ENCODE measurements at regions of chr1 and their contacts with region 1.

Region 1: GRCh38 chr1:113811888-113812660 is at the start of gene RSBN1:
- DNase-seq: peak; percentile 94 to 98
- ATAC-seq: peak; percentile 84 to 97 (median 88)
- H3K4me3 ChIP-seq: peak within 1 kb of the TSS; percentile 85
- H3K4me3 Mint-ChIP-seq: peak within 1 kb of the TSS; percentile 98
- H3K27ac ChIP-seq: peak within 1 kb of the TSS; percentile 97
- H3K27ac Mint-ChIP-seq: peak within 1 kb of the TSS; percentile 95
- H3K4me1 ChIP-seq: peaks cover 8% of the 10 kb centered on the region
- H3K4me1 Mint-ChIP-seq: peaks cover 37 to 38% of the 10 kb centered on the region in 2 donors
- H3K27me3 ChIP-seq: no peaks in the 10 kb centered on the region
- H3K27me3 Mint-ChIP-seq: no peaks in the 10 kb centered on the region
- CTCF ChIP-seq: no peak
- total RNA-seq, gene RSBN1: 30.1 to 37.9 (median 36.5) TPM

Region 2: DNA sequence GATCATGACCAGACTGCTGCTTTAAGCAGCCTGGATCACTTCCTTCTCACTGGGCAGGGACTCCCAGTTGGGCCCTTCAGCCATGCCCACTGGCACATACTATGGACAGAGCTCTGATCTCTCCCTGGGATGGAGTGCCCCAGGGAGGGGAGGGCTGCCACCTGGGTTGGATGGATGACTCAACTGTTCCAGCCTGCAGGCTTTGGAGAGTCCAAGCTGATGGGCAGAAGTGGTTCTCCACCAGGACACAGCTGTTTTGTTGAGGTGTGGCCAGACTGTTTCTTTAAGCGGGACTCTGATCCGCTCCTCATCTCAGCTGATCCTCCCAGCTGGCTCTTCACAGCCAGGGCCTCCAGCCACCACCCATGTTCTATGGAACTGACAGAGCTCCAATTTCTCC is 254.9 kb before region 1 on chr1:
- intact Hi-C with region 1: no loop called
- DNase-seq: no peak
- ATAC-seq: no peak
- H3K4me3 ChIP-seq: no peak overlapping the region
- H3K4me3 Mint-ChIP-seq: no peak overlapping the region
- H3K27ac ChIP-seq: no peak overlapping the region
- H3K27ac Mint-ChIP-seq: no peak overlapping the region
- H3K4me1 ChIP-seq: no peaks in the 10 kb centered on the region
- H3K4me1 Mint-ChIP-seq: no peaks in the 10 kb centered on the region
- H3K27me3 ChIP-seq: no peaks in the 10 kb centered on the region
- H3K27me3 Mint-ChIP-seq: peaks cover 14 to 26% of the 10 kb centered on the region in 2 donors
- CTCF ChIP-seq: no peak

Region 3: DNA sequence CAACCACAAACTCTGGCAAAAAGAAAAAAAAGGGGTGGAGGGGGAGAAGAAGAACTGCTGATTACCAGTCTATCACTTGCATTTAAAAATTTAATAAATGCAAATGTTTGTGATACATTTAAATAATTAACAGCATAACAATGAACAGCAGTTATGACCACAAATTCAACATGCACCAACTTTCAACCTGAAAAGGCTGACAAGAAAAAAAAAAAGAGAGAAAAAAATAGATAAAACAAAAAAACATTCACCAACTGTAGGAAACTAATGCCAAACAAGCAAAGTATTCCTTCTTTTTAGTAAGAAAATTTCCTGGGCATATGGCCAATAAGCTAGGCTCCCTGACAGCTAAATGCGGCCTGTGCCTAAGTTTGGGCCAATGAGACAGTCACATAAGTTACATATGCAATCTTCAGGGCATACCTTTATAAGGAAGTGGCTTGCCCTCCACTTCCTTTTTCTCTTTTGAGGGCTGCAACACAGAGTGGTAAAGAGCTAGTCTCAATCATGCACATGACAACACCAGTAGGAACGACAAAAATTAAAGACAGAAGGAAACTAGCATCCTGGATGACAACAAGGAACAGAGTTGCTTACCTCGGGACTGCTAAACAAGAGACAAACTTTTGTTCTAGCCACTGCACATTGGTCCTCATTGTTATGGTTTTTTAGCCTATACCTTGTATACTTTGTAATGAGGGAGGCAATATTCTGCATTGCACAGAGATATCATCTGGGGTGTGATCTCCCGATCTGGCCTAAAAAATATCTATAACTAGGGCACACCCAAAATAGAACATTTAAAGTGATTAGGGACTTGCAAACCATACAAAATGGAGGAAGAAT is 28.6 kb before region 1 on chr1:
- intact Hi-C with region 1: loop called (anchors 1 kb)
- DNase-seq: peak; percentile 24 to 81
- ATAC-seq: peak; percentile 91 to 95 (median 95)
- H3K4me3 ChIP-seq: no peak overlapping the region
- H3K4me3 Mint-ChIP-seq: peak overlapping the region; percentile 83
- H3K27ac ChIP-seq: peak overlapping the region; percentile 80
- H3K27ac Mint-ChIP-seq: no peak overlapping the region
- H3K4me1 ChIP-seq: peaks cover 19% of the 10 kb centered on the region
- H3K4me1 Mint-ChIP-seq: peaks cover 30 to 32% of the 10 kb centered on the region in 2 donors
- H3K27me3 ChIP-seq: no peaks in the 10 kb centered on the region
- H3K27me3 Mint-ChIP-seq: no peaks in the 10 kb centered on the region
- CTCF ChIP-seq: no peak

Region 4: GRCh38 chr1:114126261-114127095 is 314.4 kb after region 1 on chr1:
- intact Hi-C with region 1: no loop called
- DNase-seq: no peak
- ATAC-seq: peak; percentile 38 to 87 (median 68)
- H3K4me3 ChIP-seq: no peak overlapping the region
- H3K4me3 Mint-ChIP-seq: no peak overlapping the region
- H3K27ac ChIP-seq: peak overlapping the region; percentile 2
- H3K27ac Mint-ChIP-seq: peak overlapping the region in 1 of 2 donors; percentile 69
- H3K4me1 ChIP-seq: peaks cover 13% of the 10 kb centered on the region
- H3K4me1 Mint-ChIP-seq: peaks cover 28 to 41% of the 10 kb centered on the region in 2 donors
- H3K27me3 ChIP-seq: no peaks in the 10 kb centered on the region
- H3K27me3 Mint-ChIP-seq: peaks cover 3 to 5% of the 10 kb centered on the region in 2 donors
- CTCF ChIP-seq: no peak